ENCODE measurements at regions of chr1 and their contacts with region 1.

Region 1: DNA sequence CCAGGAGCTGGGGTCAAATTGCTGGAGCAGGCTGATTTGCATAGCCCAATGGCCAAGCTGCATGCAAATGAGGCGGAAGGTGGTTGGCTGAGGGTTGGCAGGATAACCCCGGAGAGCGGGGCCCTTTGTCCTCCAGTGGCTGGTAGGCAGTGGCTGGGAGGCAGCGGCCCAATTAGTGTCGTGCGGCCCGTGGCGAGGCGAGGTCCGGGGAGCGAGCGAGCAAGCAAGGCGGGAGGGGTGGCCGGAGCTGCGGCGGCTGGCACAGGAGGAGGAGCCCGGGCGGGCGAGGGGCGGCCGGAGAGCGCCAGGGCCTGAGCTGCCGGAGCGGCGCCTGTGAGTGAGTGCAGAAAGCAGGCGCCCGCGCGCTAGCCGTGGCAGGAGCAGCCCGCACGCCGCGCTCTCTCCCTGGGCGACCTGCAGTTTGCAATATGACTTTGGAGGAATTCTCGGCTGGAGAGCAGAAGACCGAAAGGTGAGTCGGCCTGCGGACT is at the start of gene GADD45A:
- DNase-seq: peak; percentile 99
- ATAC-seq: peak; percentile 95
- H3K4me3 ChIP-seq: peak within 1 kb of the TSS; percentile 80 to 96
- H3K27ac ChIP-seq: peak within 1 kb of the TSS; percentile 87 to 95
- H3K4me1 ChIP-seq: peaks cover 0 to 5% of the 10 kb centered on the region in 2 donors
- H3K27me3 ChIP-seq: no peaks in the 10 kb centered on the region
- total RNA-seq, gene GADD45A: 49.7 to 158 TPM

Region 2: DNA sequence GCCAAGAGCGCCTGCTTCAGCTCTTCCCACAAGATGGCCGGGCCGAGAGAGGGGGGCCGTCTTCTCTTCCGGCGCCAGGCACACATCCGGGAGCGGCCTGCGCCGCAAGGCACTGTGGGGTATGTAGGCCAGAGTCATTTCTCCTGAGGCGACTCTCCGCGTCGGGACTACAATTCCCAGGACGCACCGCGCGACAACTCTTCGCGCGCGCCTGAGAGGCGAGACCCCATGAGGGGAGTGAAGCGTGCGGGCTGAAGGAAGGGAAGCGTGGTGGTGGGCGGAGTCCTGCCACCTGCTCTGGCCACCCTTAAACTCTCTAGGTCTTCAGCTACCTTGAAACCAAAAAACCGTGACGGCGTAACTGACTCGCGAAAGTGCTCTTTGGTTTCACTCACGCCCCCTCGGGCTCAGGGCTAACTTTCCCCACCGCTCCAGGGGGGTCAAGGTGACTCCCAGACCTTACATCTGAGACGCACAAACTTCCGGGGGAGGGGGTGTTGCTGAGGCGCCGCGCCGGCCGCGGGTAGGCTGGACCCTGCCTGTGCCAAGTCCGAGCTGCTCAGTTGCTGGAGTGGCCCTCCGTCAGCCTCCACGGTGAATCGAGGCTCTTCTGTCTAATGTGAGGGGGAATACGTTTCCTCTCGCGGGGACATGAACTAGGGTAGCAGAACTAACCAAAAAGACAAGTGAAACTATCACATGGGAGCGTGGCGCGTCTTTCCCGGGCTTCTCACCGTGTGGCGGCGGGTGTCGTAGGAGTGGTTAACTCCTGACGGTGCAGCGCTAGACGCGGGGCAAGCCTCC is 254.6 kb before region 1 on chr1 and contains the start of gene SERBP1:
- intact Hi-C with region 1: no loop called
- DNase-seq: peak; percentile 97 to 99
- ATAC-seq: peak; percentile 99
- H3K4me3 ChIP-seq: peak within 1 kb of the TSS; percentile 61 to 86
- H3K27ac ChIP-seq: peak within 1 kb of the TSS; percentile 59 to 78
- H3K4me1 ChIP-seq: no peaks in the 10 kb centered on the region
- H3K27me3 ChIP-seq: no peaks in the 10 kb centered on the region
- total RNA-seq, gene SERBP1: 153 to 157 TPM

Region 3: GRCh38 chr1:67748630-67749029 is 63.5 kb after region 1 on chr1:
- intact Hi-C with region 1: loop called (anchors 2 kb)
- DNase-seq: no peak
- ATAC-seq: peak; percentile 66
- H3K4me3 ChIP-seq: peak overlapping the region in 1 of 2 donors; percentile 7
- H3K27ac ChIP-seq: peak overlapping the region; percentile 84 to 99
- H3K4me1 ChIP-seq: peaks cover 16 to 19% of the 10 kb centered on the region in 2 donors
- H3K27me3 ChIP-seq: no peaks in the 10 kb centered on the region

Measured in aorta (tissue), 5 donors.